PC-3 (cell line): ENCODE measurements at regions of chr9 and their contacts with region 1.

Region 1: DNA sequence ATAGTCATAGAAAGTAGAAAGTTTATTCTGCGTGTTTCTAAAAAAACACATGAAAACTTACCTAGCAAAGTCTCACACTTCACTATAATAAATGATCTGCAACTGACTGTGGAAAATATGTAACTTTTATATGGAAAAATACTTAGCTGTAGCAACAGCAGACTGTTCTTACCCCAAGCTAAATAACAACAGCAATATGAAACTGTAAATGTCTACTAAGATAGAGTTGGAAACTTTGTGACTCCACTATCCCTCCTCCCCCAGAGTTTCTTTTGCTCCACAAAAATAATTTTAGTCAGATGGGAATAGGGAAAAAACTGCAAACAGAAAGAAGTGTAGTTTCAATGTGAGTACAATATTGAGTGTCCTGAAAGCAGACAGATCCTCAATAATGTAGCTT is 21.0 kb downstream of the MLLT3 start:
- DNase-seq: no peak
- ATAC-seq: no peak
- H3K4me3 ChIP-seq: no peak overlapping the region
- H3K27ac ChIP-seq: no peak overlapping the region
- H3K4me1 ChIP-seq: no peaks in the 10 kb centered on the region
- H3K27me3 ChIP-seq: no peaks in the 10 kb centered on the region
- CTCF ChIP-seq: no peak

Region 2: GRCh38 chr9:20701060-20701459 is 99.8 kb after region 1 on chr9:
- CTCF ChIA-PET with region 1: no interaction called
- POLR2A ChIA-PET with region 1: no interaction called
- intact Hi-C with region 1: no loop called
- DNase-seq: no peak
- ATAC-seq: no peak
- H3K4me3 ChIP-seq: no peak overlapping the region
- H3K27ac ChIP-seq: no peak overlapping the region
- H3K4me1 ChIP-seq: no peaks in the 10 kb centered on the region
- H3K27me3 ChIP-seq: no peaks in the 10 kb centered on the region
- CTCF ChIP-seq: no peak

Region 3: GRCh38 chr9:21234153-21234687 is 632.9 kb after region 1 on chr9:
- CTCF ChIA-PET with region 1: interaction called, 13 read pairs
- POLR2A ChIA-PET with region 1: no interaction called
- intact Hi-C with region 1: no loop called
- DNase-seq: no peak
- ATAC-seq: no peak
- H3K4me3 ChIP-seq: no peak overlapping the region
- H3K27ac ChIP-seq: no peak overlapping the region
- H3K4me1 ChIP-seq: no peaks in the 10 kb centered on the region
- H3K27me3 ChIP-seq: peaks cover 3% of the 10 kb centered on the region; the same call in 1 of the 2 replicates
- CTCF ChIP-seq: no peak